PC-9 (cell line): ENCODE measurements at regions of chr1 and their contacts with region 1.

Region 1: DNA sequence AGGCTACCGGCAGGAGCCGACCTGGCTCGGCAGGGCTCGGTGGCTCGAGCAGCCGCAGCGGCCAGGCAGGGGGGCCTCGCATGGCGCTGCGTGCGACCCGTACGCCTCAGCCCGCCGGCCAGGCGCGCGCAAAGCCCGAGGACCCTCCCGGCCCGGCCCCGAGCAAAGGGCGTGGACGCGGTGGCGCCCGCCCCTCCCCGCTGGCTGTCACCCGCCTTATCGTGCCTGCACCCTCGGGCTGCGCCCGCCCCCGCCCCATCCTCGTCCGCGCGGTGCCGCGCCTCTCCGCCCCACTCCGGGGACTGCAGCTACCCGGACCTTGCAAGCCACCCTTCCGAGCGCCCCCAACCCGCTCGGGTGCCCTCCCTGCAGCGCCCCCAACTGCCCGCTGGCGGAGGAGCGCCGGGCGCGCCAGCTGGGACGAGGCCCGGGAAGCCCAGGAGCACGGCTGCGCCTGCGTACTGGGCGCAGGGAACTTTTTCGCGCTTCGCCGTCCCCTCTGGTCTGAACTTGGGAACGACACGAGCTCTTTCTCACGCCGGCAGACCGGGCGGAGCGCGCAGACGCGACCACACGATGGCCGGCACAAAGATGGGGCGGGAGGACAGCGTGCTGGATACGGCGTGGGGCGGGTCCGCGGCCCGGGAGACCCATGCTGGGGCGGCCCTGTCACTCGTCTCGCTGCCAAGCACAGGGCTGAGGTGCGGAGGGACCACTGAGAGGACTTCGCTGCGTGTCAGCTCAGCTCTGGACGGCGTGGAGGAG is at the start of gene ABCB10:
- DNase-seq: peak; percentile 90 to 97
- H3K4me3 ChIP-seq: peak within 1 kb of the TSS; percentile 70
- H3K27ac ChIP-seq: no peak within 1 kb of the TSS
- H3K4me1 ChIP-seq: peaks cover 10% of the 10 kb centered on the region; the same call in 1 of the 2 replicates
- H3K27me3 ChIP-seq: no peaks in the 10 kb centered on the region
- CTCF ChIP-seq: peak; percentile 73
- total RNA-seq, gene ABCB10: 9.4 and 12.1 TPM in 2 replicates

Region 2: GRCh38 chr1:228830954-228831481 is 727.7 kb before region 1 on chr1:
- CTCF ChIA-PET with region 1: no interaction called
- POLR2A ChIA-PET with region 1: no interaction called
- intact Hi-C with region 1: no loop called
- DNase-seq: no peak
- H3K4me3 ChIP-seq: no peak overlapping the region
- H3K27ac ChIP-seq: no peak overlapping the region
- H3K4me1 ChIP-seq: no peaks in the 10 kb centered on the region
- H3K27me3 ChIP-seq: peaks cover 53% of the 10 kb centered on the region
- CTCF ChIP-seq: no peak

Region 3: GRCh38 chr1:229625915-229626831 is 67.4 kb after region 1 on chr1 and contains the starts of genes TAF5L and URB2:
- CTCF ChIA-PET with region 1: no interaction called
- POLR2A ChIA-PET with region 1: interaction called, 18 read pairs
- intact Hi-C with region 1: loop called (anchors 1 kb)
- DNase-seq: peak; percentile 69 to 90
- H3K4me3 ChIP-seq: peak within 1 kb of the TSS; percentile 99
- H3K27ac ChIP-seq: peak within 1 kb of the TSS; percentile 27; the same call in 1 of the 2 replicates
- H3K4me1 ChIP-seq: peaks cover 22% of the 10 kb centered on the region
- H3K27me3 ChIP-seq: no peaks in the 10 kb centered on the region
- CTCF ChIP-seq: no peak
- total RNA-seq, gene TAF5L: 12.1 and 16.4 TPM in 2 replicates
- total RNA-seq, gene URB2: 6.6 and 7.7 TPM in 2 replicates

Region 4: DNA sequence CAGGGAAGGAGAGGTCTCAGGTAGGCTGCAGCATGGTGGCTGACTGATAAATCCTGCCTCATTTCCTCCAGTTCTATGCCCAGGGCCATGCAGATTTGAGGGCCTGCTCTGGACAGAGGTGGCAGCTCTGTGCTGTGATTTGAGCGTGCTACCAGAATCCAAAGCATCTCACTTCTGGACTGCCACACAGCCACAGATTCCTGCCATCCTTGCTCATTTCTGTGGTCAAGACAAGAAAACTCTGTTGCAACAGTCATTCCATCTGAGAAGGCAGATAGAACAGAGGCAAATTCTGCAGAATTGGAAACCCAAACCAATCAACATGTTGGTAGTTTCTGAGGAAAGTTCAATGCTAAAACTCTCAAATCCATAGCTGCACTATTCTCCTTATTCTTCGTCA is 405.5 kb after region 1 on chr1:
- CTCF ChIA-PET with region 1: no interaction called
- POLR2A ChIA-PET with region 1: no interaction called
- intact Hi-C with region 1: no loop called
- DNase-seq: no peak
- H3K4me3 ChIP-seq: no peak overlapping the region
- H3K27ac ChIP-seq: no peak overlapping the region
- H3K4me1 ChIP-seq: no peaks in the 10 kb centered on the region
- H3K27me3 ChIP-seq: peaks cover 24% of the 10 kb centered on the region; the same call in 1 of the 2 replicates
- CTCF ChIP-seq: no peak